Vagina (tissue), 2 donors: ENCODE measurements at regions of chr2 and their contacts with region 1.

Region 1: GRCh38 chr2:11863513-11864328 is 117.3 kb downstream of the LPIN1 start:
- DNase-seq: peak in 1 of 2 donors; percentile 95
- H3K4me3 ChIP-seq: peak overlapping the region in 1 of 2 donors; percentile 7
- H3K27ac ChIP-seq: peak overlapping the region; percentile 46
- H3K4me1 ChIP-seq: peaks cover 10% of the 10 kb centered on the region
- H3K27me3 ChIP-seq: no peaks in the 10 kb centered on the region
- CTCF ChIP-seq: peak; percentile 49 to 98 (median 95)
- POLR2A ChIP-seq: no peak

Region 2: DNA sequence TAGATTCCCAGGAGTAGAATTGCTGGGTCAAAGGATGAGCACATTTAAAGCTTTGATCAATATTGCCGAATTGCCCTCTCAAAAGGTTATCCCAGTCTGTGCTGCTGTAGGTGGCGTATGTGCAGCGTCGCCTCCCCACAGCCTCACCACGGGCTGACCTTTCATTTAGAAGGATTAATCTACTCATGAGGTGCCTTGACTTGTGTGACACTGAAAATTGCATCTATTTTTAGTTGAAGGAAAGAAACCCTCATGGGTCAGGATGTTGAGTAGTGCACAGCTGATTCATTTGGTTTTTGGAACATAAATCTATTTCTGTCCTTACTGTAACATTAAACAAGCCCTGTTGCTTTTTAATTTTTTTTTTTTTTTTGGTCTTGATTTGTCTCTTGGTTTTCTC is 56.6 kb before region 1 on chr2:
- intact Hi-C with region 1: no loop called
- DNase-seq: peak; percentile 7 to 18
- H3K4me3 ChIP-seq: no peak overlapping the region
- H3K27ac ChIP-seq: no peak overlapping the region
- H3K4me1 ChIP-seq: no peaks in the 10 kb centered on the region
- H3K27me3 ChIP-seq: no peaks in the 10 kb centered on the region
- CTCF ChIP-seq: no peak
- POLR2A ChIP-seq: no peak

Region 3: DNA sequence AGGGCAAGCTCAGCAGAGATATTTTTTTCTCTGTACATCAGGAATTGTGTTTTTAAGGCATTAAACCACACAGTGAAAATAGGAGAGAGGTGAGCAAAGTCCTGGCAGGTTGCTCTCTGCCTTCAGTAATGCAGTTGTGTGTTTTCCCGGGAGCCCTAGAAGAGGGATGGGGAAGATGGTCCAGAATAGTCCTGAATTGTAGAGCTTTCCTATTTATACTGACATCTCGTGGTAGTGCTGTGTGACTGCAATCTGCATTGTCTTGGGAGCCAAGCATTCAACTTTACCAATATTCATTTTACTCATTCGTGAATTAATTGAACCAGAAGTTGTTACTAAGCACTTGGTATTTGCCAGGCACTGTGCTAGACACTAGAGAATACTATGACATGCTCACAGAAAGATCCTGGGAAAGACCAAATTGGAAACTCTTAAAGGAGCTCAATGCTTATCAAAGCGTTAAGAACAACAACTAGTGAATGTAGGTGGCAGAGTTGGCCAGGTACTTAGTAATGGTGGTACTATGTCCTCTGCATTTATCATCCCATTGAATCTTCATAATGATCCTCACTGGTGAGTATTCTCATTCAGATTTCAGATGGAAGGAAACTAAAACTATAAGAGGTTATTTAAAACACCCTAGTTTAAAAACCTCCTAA is 1067.6 kb after region 1 on chr2:
- intact Hi-C with region 1: loop called (anchors 10 kb)
- DNase-seq: no peak
- H3K4me3 ChIP-seq: no peak overlapping the region
- H3K27ac ChIP-seq: no peak overlapping the region
- H3K4me1 ChIP-seq: peaks cover 25% of the 10 kb centered on the region
- H3K27me3 ChIP-seq: no peaks in the 10 kb centered on the region
- CTCF ChIP-seq: peak; percentile 50 to 89 (median 88)
- POLR2A ChIP-seq: no peak

Region 4: DNA sequence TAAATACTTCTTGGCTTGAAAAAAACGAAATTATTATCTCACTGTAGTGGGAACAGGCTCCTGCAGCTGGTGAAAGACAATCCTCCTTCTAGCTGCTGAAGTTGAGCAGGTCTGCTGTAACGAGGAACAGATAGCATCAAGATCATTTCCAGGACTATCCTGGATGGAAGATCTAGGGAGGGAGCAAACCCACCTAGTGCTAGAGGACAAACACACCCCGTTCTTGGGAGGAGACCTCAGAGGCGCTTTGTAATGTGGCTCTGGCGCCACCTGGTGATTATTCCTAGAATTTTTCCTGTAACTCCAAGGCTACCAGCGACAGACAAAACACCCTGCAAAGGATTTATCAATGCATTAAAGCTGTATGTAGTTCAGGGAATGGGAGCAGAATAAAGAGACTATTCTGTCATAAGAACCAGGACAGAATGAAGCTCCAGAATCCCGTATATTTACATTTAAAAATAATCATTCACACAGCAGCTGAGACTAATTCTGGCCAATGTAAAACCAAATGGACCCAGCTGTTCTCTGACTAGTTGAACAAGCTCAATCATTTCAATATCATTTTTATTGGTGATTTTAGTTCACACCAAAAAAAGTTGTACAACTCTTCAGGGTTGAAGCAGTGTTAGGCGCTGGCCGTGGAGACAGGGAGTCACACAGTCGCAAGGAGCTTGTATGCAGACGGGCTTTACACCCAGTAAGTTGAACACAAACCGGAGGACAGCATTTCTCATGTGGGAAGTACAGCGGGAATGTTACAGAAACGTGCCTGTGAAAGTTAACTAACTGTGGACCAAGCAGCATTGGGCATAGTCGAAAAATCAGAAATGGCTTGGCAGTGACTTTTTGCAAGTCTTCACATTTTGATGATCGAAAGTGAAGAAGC is 1143.4 kb after region 1 on chr2:
- intact Hi-C with region 1: loop called (anchors 10 kb)
- DNase-seq: no peak
- H3K4me3 ChIP-seq: no peak overlapping the region
- H3K27ac ChIP-seq: no peak overlapping the region
- H3K4me1 ChIP-seq: peaks cover 13% of the 10 kb centered on the region
- H3K27me3 ChIP-seq: no peaks in the 10 kb centered on the region
- CTCF ChIP-seq: peak; percentile 68 to 96 (median 84)
- POLR2A ChIP-seq: no peak